B cell (primary cell): ENCODE measurements at regions of chr12 and their contacts with region 1.

Region 1: GRCh38 chr12:116898669-116899068 is 12.1 kb upstream of the FBXW8 start:
- DNase-seq: no peak
- ATAC-seq: no peak
- H3K4me3 ChIP-seq: no peak overlapping the region
- H3K4me3 Mint-ChIP-seq: no peak overlapping the region
- H3K27ac ChIP-seq: no peak overlapping the region
- H3K27ac Mint-ChIP-seq: no peak overlapping the region
- H3K4me1 ChIP-seq: no peaks in the 10 kb centered on the region
- H3K4me1 Mint-ChIP-seq: no peaks in the 10 kb centered on the region
- H3K27me3 ChIP-seq: peaks cover 0 to 9% (median 4%) of the 10 kb centered on the region in 4 experiments
- H3K27me3 Mint-ChIP-seq: peaks cover 44% of the 10 kb centered on the region
- CTCF ChIP-seq: no peak

Region 2: DNA sequence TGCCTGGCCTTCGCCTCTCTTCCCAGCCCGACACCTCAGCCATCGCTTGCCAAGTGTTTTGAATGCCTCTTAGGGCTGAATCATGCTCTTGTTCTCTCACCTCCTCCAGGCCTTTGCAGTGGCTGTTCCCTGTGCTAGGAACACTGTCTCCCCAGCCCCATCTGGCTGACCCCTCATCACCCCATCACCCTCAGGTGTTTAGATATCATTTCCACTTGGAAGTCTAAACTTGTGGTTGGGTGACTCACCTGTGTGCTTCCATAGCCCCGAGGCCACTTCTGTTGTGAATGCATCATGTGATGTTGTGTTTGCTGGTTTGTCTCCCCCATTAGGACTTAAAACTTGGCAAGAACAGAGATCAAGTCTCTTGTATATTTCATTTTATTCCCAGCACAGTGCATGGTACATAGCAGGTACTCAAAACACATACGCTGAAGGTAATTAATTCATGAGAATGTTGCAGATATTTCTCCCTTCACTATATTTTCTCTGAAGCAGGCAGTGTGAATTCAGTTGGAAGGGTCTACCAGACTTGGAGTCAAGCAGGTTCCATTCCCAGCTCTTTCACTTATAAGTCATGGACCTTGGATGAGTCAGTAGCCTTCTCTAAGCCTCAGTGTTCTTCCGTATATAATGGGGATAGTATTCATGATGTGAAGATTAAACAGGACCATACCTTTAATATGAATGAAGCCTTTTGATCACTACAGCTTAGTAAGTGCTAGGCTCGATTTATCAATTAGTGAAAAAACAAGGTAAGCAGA is 85.2 kb before region 1 on chr12:
- CTCF ChIA-PET with region 1: no interaction called
- POLR2A ChIA-PET with region 1: interaction called, 10 read pairs
- intact Hi-C with region 1: no loop called
- DNase-seq: no peak
- ATAC-seq: no peak
- H3K4me3 ChIP-seq: no peak overlapping the region
- H3K4me3 Mint-ChIP-seq: no peak overlapping the region
- H3K27ac ChIP-seq: no peak overlapping the region
- H3K27ac Mint-ChIP-seq: peak overlapping the region; percentile 84
- H3K4me1 ChIP-seq: peaks cover 45 to 72% of the 10 kb centered on the region in 2 donors
- H3K4me1 Mint-ChIP-seq: peaks cover 62% of the 10 kb centered on the region
- H3K27me3 ChIP-seq: no peaks in the 10 kb centered on the region
- H3K27me3 Mint-ChIP-seq: no peaks in the 10 kb centered on the region
- CTCF ChIP-seq: no peak